Colonic mucosa (tissue), 4 donors: ENCODE measurements at regions of chr9 and their contacts with region 1.

Region 1: GRCh38 chr9:4762108-4762885 is 21.3 kb upstream of the AK3 start:
- DNase-seq: peak; percentile 91
- H3K4me3 ChIP-seq: peak overlapping the region; percentile 17
- H3K27ac ChIP-seq: peak overlapping the region; percentile 48
- H3K4me1 ChIP-seq: no peaks in the 10 kb centered on the region
- H3K27me3 ChIP-seq: no peaks in the 10 kb centered on the region
- CTCF ChIP-seq: peak; percentile 77

Region 2: GRCh38 chr9:4814913-4815312 is 52.6 kb after region 1 on chr9:
- intact Hi-C with region 1: no loop called
- DNase-seq: no peak
- H3K4me3 ChIP-seq: no peak overlapping the region
- H3K27ac ChIP-seq: peak overlapping the region; percentile 40
- H3K4me1 ChIP-seq: no peaks in the 10 kb centered on the region
- H3K27me3 ChIP-seq: no peaks in the 10 kb centered on the region
- CTCF ChIP-seq: no peak

Region 3: GRCh38 chr9:4923580-4924544 is 161.6 kb after region 1 on chr9:
- intact Hi-C with region 1: loop called (anchors 5 kb)
- DNase-seq: no peak
- H3K4me3 ChIP-seq: no peak overlapping the region
- H3K27ac ChIP-seq: no peak overlapping the region
- H3K4me1 ChIP-seq: no peaks in the 10 kb centered on the region
- H3K27me3 ChIP-seq: no peaks in the 10 kb centered on the region
- CTCF ChIP-seq: peak; percentile 23